A549 (cell line): ENCODE measurements at regions of chr9 and their contacts with region 1.

Region 1: DNA sequence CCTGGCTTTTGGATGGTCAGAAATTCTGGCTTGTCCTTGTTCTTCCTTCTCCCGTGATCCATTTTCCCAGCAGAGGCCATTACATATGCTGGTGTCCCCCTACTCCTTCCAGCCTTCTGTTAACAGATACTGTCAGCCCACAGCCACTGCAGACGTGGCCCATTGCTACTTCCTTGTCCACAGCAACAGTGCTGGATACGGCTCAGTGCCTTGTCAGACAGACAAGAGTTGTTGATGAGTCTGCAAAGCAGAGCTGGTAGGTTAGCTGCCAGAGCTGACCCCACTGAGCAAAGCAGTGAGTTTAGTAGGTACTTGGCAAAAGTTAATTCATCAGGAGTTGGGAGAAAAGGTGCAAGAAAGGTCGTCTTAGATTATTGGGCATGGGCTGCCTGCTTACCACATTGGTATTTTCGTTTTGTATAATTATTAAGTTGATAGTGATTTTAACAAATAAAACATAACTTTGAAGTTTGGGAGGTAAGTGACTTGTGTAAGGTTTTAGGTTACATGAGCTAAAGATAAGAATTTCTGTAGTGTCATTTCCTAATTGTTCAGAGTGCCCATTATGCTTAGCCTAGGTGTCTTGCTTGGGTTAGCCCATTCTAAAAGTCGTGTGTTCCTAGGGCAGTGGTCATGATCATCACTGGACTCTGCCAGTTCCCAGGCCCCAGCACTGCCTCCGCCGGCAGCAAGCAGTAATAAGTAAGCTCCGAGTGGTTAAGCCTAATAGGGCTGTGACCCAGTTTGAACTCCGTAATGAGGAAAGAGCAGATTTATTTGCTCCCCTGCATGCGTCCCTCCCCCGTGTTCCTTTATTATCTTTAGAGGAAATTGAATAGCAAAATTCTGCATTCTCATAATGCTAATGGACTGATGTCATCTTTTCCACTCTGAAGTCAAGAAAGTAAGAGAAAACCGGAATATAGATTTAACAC is 292.0 kb downstream of the FANCC start:
- DNase-seq: peak in 1 of 2 experiments; percentile 93
- ATAC-seq: peak; percentile 71 to 76
- H3K4me3 ChIP-seq: peak overlapping the region; percentile 11; the same call in 1 of the 3 replicates
- H3K27ac ChIP-seq: peak overlapping the region; percentile 86 to 99
- H3K4me1 ChIP-seq: peaks cover 100% of the 10 kb centered on the region
- CTCF ChIP-seq: no peak
- EP300 ChIP-seq: peak in 1 of 2 experiments; percentile 60; a peak in 2 of 5 replicates
- POLR2A ChIP-seq: no peak
- RAD21 ChIP-seq: peak; percentile 41 to 43; a peak in 4 of 5 replicates

Region 2: GRCh38 chr9:94900222-94901018 is 125.1 kb before region 1 on chr9:
- CTCF ChIA-PET with region 1: no interaction called
- POLR2A ChIA-PET with region 1: interaction called, 10 read pairs
- DNase-seq: peak in 1 of 2 experiments; percentile 83
- ATAC-seq: peak; percentile 73 to 81
- H3K4me3 ChIP-seq: peak overlapping the region; percentile 24
- H3K27ac ChIP-seq: peak overlapping the region; percentile 97 to 99
- H3K4me1 ChIP-seq: peaks cover 90% of the 10 kb centered on the region
- CTCF ChIP-seq: no peak
- EP300 ChIP-seq: peak; percentile 56 to 78; a peak in 1 of 5 replicates
- POLR2A ChIP-seq: no peak
- RAD21 ChIP-seq: no peak; a peak in 1 of 5 replicates

Region 3: DNA sequence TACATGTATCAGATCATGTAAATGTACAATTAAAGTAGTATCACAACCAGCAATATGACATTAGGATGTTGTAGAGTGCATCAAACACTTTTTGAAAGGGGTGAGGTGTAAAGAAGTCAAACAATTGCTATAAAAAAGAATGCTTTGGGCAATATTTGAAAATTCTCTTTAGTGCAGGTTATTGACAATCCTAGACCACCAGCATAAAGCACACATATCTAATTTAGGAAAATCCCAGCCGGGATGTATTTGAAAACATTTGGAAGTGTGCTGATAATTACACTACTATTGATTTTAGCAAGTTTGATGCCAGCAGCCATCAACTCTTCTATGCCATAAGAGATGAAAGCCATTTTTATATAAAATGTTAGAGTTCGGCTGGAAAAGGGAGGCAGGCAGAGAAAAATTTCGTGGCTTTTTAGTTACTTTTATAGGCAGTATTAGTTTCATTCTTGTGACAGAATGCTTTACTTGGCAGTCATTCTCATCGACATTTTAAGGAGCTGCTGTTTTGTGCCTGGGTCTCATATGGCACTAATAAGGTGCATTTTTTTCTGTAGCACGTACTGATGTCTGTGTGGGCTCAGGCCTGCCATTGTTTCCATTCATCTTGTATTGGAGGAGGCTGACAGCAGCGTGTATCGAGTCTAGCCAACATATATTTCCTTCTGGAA is 13.3 kb before region 1 on chr9:
- CTCF ChIA-PET with region 1: interaction called, 8 read pairs
- POLR2A ChIA-PET with region 1: interaction called, 15 read pairs
- DNase-seq: no peak
- ATAC-seq: no peak
- H3K4me3 ChIP-seq: peak overlapping the region; percentile 2; the same call in 1 of the 3 replicates
- H3K27ac ChIP-seq: peak overlapping the region; percentile 80 to 99
- H3K4me1 ChIP-seq: peaks cover 87% of the 10 kb centered on the region
- CTCF ChIP-seq: no peak
- EP300 ChIP-seq: no peak
- POLR2A ChIP-seq: no peak
- RAD21 ChIP-seq: no peak

Region 4: GRCh38 chr9:95138474-95138873 is 113.0 kb after region 1 on chr9:
- CTCF ChIA-PET with region 1: no interaction called
- POLR2A ChIA-PET with region 1: no interaction called
- DNase-seq: no peak
- ATAC-seq: peak in 1 of 2 experiments; percentile 55; a peak in 3 of 6 replicates
- H3K4me3 ChIP-seq: no peak overlapping the region
- H3K27ac ChIP-seq: no peak overlapping the region
- H3K4me1 ChIP-seq: no peaks in the 10 kb centered on the region
- CTCF ChIP-seq: no peak
- EP300 ChIP-seq: no peak
- POLR2A ChIP-seq: no peak
- RAD21 ChIP-seq: no peak